ENCODE measurements at regions of chr2 and their contacts with region 1.

Region 1: DNA sequence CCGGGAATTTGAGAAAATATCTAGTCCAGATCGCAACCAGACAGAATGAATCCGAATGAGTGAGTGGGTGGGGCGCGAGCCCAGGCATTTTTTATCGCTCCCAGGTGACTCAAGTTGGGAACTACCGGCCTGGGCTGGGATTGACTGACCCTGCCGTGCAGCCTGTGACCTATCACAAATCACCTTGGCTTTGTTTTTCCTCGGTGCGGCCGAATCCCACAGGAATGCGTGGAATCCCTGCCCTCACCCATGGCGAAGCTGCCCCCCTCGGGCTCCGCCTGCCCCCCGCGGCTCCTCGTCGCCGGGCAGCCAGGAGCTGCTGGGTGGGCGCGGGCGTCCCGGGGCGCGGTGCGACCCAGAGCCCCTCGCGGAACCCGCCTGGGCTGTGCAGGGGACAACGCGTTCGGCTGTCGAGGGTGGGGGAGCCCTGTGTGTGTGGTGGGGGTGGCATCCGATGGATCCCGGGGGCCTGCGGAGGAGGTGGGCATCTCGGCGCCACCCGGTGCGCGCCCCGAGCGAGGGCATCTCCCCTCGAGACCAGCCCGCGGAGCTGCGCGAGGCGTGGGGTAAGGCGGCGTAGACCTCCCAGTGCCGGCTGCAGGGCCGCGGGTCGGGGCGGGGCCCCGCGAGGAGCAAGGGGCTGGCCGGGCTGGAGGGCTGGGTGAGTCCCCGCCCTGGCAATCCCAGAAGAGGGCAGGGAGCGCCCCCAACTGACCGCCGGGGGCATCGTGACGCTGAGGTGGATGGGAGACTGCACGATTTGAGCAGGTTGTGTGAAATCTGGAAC is 16.5 kb downstream of the B3GNT7 start:
- DNase-seq: peak; percentile 97
- H3K4me3 ChIP-seq: peak overlapping the region; percentile 55
- H3K27ac ChIP-seq: peak overlapping the region; percentile 86
- H3K4me1 ChIP-seq: peaks cover 4% of the 10 kb centered on the region
- H3K27me3 ChIP-seq: no peaks in the 10 kb centered on the region
- CTCF ChIP-seq: peak; percentile 91

Region 2: GRCh38 chr2:231227309-231228162 is 184.5 kb before region 1 on chr2:
- intact Hi-C with region 1: loop called (anchors 5 kb)
- DNase-seq: peak; percentile 78
- H3K4me3 ChIP-seq: no peak overlapping the region
- H3K27ac ChIP-seq: no peak overlapping the region
- H3K4me1 ChIP-seq: peaks cover 12% of the 10 kb centered on the region
- H3K27me3 ChIP-seq: no peaks in the 10 kb centered on the region
- CTCF ChIP-seq: peak; percentile 78

Region 3: GRCh38 chr2:231260442-231261208 is 151.4 kb before region 1 on chr2:
- intact Hi-C with region 1: no loop called
- DNase-seq: no peak
- H3K4me3 ChIP-seq: no peak overlapping the region
- H3K27ac ChIP-seq: no peak overlapping the region
- H3K4me1 ChIP-seq: peaks cover 4% of the 10 kb centered on the region
- H3K27me3 ChIP-seq: no peaks in the 10 kb centered on the region
- CTCF ChIP-seq: no peak

Region 4: DNA sequence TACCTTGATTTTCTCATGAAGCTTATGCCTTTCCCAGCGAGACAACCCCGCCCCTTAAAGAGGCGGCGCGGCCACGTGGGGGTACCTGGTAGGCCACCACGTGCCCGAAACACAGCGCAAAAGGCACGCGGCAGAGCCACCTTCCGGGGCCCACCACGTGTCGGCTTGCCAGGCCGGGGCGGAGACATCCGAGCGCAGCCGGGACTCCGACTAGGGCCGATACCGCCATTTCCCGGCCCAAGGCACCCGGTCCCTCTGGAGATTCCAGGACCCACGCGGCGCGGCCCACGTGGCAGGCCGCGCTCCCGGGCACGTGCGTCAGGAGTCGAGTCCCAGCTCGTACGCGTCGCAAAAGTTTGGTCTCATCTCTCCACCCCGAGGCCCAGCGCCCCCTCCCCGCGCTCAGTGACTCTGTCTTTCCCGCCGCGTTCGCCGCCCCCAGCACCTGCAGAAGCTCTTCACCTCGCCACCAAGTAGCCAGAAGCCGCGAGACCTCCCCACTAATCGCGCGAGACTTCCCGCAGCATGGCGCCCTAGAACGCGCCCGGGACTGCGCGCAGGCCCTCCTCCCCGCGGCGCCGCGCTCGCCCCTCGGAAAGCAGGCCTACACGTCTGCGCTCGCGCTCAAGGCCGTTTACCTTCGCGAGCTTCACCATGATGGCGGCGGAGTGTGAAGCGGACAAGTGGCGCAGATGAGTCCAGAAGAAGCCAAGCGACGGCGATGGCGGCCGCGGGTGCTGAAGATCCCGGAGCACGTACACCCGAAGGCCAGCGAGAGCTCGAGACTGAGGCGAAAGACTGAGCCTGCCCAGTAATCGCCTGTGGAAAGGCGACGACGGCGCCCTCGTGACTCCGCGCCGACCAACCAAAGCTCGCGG is 51.9 kb after region 1 on chr2 and contains the start of gene NCL:
- intact Hi-C with region 1: loop called (anchors 5 kb)
- DNase-seq: peak; percentile 83
- H3K4me3 ChIP-seq: peak within 1 kb of the TSS; percentile 91
- H3K27ac ChIP-seq: peak within 1 kb of the TSS; percentile 97
- H3K4me1 ChIP-seq: peaks cover 10% of the 10 kb centered on the region
- H3K27me3 ChIP-seq: no peaks in the 10 kb centered on the region
- CTCF ChIP-seq: no peak
- total RNA-seq, gene NCL: 309 to 534 TPM

Measured in colonic mucosa (tissue), 4 donors.